ENCODE measurements at regions of chr3 and their contacts with region 1.

Region 1: DNA sequence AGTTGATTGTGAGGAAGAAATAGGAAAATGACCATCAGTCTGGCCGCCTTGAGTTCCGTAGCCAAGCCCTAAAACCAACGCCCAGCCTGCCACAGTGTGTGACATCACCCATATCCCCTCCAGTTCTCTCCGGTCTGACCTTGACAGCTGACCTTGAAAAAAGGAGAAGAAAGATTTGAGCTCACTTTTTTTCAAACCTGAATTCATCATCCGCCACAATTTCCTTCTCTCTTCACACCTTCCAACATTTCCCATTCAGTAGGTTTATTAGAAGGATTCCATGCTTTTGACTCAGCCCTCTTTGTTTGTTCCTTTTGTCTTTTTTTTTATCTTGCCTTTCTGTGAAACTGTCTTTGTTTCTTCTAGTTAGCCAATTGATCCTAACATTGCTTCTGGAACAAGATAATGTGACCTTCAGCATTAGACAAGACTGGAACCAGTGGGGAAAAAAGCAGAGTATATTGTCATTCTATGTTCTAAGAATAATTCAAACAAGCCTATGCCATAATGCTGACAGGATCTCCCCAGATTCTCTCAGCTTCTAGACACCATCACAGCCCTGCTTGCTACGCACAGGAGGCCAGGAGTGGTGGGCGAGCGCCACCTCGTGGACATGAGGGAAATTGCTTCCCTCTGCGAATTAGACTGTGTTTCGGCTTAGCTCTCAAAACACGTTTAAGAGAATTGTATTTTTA is 283.1 kb downstream of the FGF12 start:
- DNase-seq: peak in 4 of 5 donors; percentile 10 to 43 (median 26)
- H3K4me3 ChIP-seq: no peak overlapping the region
- H3K4me3 Mint-ChIP-seq: no peak overlapping the region
- H3K27ac ChIP-seq: no peak overlapping the region
- H3K27ac Mint-ChIP-seq: no peak overlapping the region
- H3K4me1 ChIP-seq: no peaks in the 10 kb centered on the region
- H3K4me1 Mint-ChIP-seq: peaks cover 0 to 2% (median 0%) of the 10 kb centered on the region in 4 donors
- H3K27me3 ChIP-seq: peaks cover 9% of the 10 kb centered on the region
- H3K27me3 Mint-ChIP-seq: peaks cover 10 to 16% of the 10 kb centered on the region in 2 donors

Region 2: DNA sequence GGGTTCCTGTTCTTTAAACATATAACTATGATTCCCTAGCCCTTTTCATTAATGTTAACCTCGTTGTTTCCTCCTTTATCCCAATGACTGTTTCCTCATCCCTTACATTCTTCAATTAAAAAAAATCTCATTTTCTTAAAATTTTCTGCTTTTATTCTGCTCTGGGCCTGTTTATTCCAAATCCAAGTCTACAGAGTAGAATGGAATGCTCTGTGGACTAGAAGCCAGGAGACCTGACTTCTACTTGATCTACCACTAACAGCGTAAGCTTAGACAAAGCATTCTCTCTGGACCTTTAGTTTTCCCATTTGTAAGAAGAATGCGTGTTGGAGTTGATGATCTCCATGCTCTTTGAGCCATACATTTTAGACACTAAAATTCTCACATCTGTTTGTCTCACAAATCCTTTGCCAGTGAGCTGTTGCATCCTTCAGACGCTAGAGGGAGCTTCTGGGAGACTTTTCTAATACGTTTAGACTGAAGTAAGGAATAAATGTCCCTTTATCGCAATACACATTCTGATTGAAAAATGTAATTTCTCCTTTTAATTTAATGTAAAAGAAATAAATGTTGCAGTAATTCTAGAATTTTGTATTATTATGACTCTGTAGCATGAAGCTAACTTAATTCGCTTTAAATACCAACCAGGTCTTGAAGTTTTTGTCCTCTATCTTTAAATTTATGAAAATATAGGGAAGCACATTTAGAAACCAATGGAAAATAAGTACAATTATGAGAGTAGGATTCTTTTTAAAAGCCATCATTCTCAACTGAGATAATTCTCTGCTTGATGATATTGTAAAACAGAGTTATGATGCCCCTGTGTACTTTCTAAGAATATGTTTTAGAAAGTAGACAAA is 1560.0 kb before region 1 on chr3:
- CTCF ChIA-PET with region 1: interaction called, 3 read pairs
- POLR2A ChIA-PET with region 1: no interaction called
- intact Hi-C with region 1: loop called (anchors 10 kb)
- DNase-seq: peak in 3 of 5 donors; percentile 2 to 9 (median 6)
- H3K4me3 ChIP-seq: no peak overlapping the region
- H3K4me3 Mint-ChIP-seq: no peak overlapping the region
- H3K27ac ChIP-seq: no peak overlapping the region
- H3K27ac Mint-ChIP-seq: no peak overlapping the region
- H3K4me1 ChIP-seq: no peaks in the 10 kb centered on the region
- H3K4me1 Mint-ChIP-seq: no peaks in the 10 kb centered on the region
- H3K27me3 ChIP-seq: no peaks in the 10 kb centered on the region
- H3K27me3 Mint-ChIP-seq: no peaks in the 10 kb centered on the region

Region 3: DNA sequence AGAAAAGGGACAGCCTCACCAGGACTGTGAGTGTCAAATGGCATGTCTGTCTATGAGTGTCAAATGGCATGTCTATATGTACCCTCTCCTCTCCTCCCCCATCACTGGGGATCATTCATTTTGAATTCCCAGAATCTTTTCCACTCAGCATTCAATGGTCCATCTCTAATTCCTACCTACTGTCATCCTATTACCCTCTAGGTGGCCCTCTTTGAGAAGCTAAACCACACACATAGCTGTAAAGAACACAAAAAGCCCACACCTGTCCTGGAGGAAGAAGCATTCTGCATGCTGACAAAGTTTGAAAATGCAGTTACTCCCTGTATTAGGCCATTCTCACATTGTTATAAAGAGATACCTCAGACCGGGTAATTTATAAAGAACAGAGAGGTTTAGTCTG is 1029.5 kb before region 1 on chr3:
- CTCF ChIA-PET with region 1: interaction called, 4 read pairs
- POLR2A ChIA-PET with region 1: no interaction called
- intact Hi-C with region 1: loop called (anchors 5 kb)
- DNase-seq: no peak
- H3K4me3 ChIP-seq: no peak overlapping the region
- H3K4me3 Mint-ChIP-seq: no peak overlapping the region
- H3K27ac ChIP-seq: no peak overlapping the region
- H3K27ac Mint-ChIP-seq: no peak overlapping the region
- H3K4me1 ChIP-seq: no peaks in the 10 kb centered on the region
- H3K4me1 Mint-ChIP-seq: peaks cover 0 to 1% (median 0%) of the 10 kb centered on the region in 4 donors
- H3K27me3 ChIP-seq: no peaks in the 10 kb centered on the region
- H3K27me3 Mint-ChIP-seq: no peaks in the 10 kb centered on the region

Region 4: GRCh38 chr3:192423003-192423349 is 21.3 kb before region 1 on chr3:
- CTCF ChIA-PET with region 1: interaction called, 12 read pairs
- POLR2A ChIA-PET with region 1: no interaction called
- intact Hi-C with region 1: no loop called
- DNase-seq: no peak
- H3K4me3 ChIP-seq: no peak overlapping the region
- H3K4me3 Mint-ChIP-seq: no peak overlapping the region
- H3K27ac ChIP-seq: no peak overlapping the region
- H3K27ac Mint-ChIP-seq: no peak overlapping the region
- H3K4me1 ChIP-seq: no peaks in the 10 kb centered on the region
- H3K4me1 Mint-ChIP-seq: no peaks in the 10 kb centered on the region
- H3K27me3 ChIP-seq: no peaks in the 10 kb centered on the region
- H3K27me3 Mint-ChIP-seq: peaks cover 4 to 6% of the 10 kb centered on the region in 2 donors

Region 5: GRCh38 chr3:192433704-192434103 is 10.5 kb before region 1 on chr3:
- CTCF ChIA-PET with region 1: interaction called, 38 read pairs
- POLR2A ChIA-PET with region 1: no interaction called
- intact Hi-C with region 1: no loop called
- DNase-seq: no peak
- H3K4me3 ChIP-seq: no peak overlapping the region
- H3K4me3 Mint-ChIP-seq: no peak overlapping the region
- H3K27ac ChIP-seq: no peak overlapping the region
- H3K27ac Mint-ChIP-seq: no peak overlapping the region
- H3K4me1 ChIP-seq: no peaks in the 10 kb centered on the region
- H3K4me1 Mint-ChIP-seq: no peaks in the 10 kb centered on the region
- H3K27me3 ChIP-seq: no peaks in the 10 kb centered on the region
- H3K27me3 Mint-ChIP-seq: peaks cover 0 to 7% of the 10 kb centered on the region in 2 donors

Region 6: DNA sequence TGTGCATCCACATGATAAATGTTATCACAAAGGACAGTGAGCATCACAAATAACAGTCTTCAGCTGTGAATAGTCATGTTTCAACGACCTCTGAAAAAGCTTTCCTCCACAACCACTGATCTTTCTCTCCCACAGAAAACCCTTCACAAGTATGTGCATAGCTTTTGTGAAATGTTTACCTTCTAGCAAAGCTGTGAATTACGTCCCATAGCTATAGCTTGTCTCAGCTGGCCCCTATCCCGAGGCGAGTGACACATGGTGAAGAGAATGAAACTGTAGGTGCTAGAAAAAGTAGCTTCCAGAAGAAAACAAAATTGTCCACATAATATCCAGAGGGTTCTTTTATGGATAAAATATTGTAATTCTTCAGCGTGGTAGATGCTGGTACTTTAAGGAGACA is 101.1 kb after region 1 on chr3:
- CTCF ChIA-PET with region 1: no interaction called
- POLR2A ChIA-PET with region 1: no interaction called
- intact Hi-C with region 1: no loop called
- DNase-seq: no peak
- H3K4me3 ChIP-seq: no peak overlapping the region
- H3K4me3 Mint-ChIP-seq: no peak overlapping the region
- H3K27ac ChIP-seq: no peak overlapping the region
- H3K27ac Mint-ChIP-seq: no peak overlapping the region
- H3K4me1 ChIP-seq: no peaks in the 10 kb centered on the region
- H3K4me1 Mint-ChIP-seq: no peaks in the 10 kb centered on the region
- H3K27me3 ChIP-seq: no peaks in the 10 kb centered on the region
- H3K27me3 Mint-ChIP-seq: peaks cover under 1% of the 10 kb centered on the region in 2 donors

Measured in CD4-positive, alpha-beta memory T cell (primary cell).